Mammary epithelial cell (primary cell): ENCODE measurements at regions of chr20 and their contacts with region 1.

Region 1: GRCh38 chr20:3820048-3820900 is at the start of gene AP5S1:
- DNase-seq: peak; percentile 94
- H3K4me3 ChIP-seq: peak within 1 kb of the TSS; percentile 77 to 94 (median 82)
- H3K27ac ChIP-seq: peak within 1 kb of the TSS; percentile 87
- H3K4me1 ChIP-seq: peaks cover 17% of the 10 kb centered on the region
- H3K27me3 ChIP-seq: no peaks in the 10 kb centered on the region
- CTCF ChIP-seq: peak; percentile 67 to 95
- total RNA-seq, gene AP5S1: 14.9 to 15.5 TPM

Region 2: GRCh38 chr20:3753098-3753980 is 66.9 kb before region 1 on chr20:
- CTCF ChIA-PET with region 1: no interaction called
- dilution Hi-C with region 1: loop called (anchors 10 kb)
- in situ Hi-C with region 1: no loop called
- intact Hi-C with region 1: loop called (anchors 1 kb)
- DNase-seq: peak; percentile 41
- H3K4me3 ChIP-seq: no peak overlapping the region
- H3K27ac ChIP-seq: no peak overlapping the region
- H3K4me1 ChIP-seq: peaks cover 19% of the 10 kb centered on the region
- H3K27me3 ChIP-seq: no peaks in the 10 kb centered on the region
- CTCF ChIP-seq: peak; percentile 71 to 80

Region 3: GRCh38 chr20:3781153-3781910 is 38.9 kb before region 1 on chr20 and contains the start of gene SPEF1:
- CTCF ChIA-PET with region 1: interaction called, 6 read pairs
- dilution Hi-C with region 1: loop called (anchors 5 kb)
- in situ Hi-C with region 1: no loop called
- intact Hi-C with region 1: no loop called
- DNase-seq: peak; percentile 88
- H3K4me3 ChIP-seq: peak within 1 kb of the TSS; percentile 2 to 55 (median 51)
- H3K27ac ChIP-seq: peak within 1 kb of the TSS; percentile 11
- H3K4me1 ChIP-seq: peaks cover 44% of the 10 kb centered on the region
- H3K27me3 ChIP-seq: no peaks in the 10 kb centered on the region
- CTCF ChIP-seq: peak; percentile 7 to 56
- total RNA-seq, gene SPEF1: 0.17 to 0.26 TPM

Region 4: GRCh38 chr20:3786665-3787323 is 33.5 kb before region 1 on chr20 and contains the start of gene CENPB:
- CTCF ChIA-PET with region 1: interaction called, 16 read pairs
- dilution Hi-C with region 1: loop called (anchors 5 kb)
- in situ Hi-C with region 1: no loop called
- intact Hi-C with region 1: loop called (anchors 1 kb)
- DNase-seq: peak; percentile 81
- H3K4me3 ChIP-seq: peak within 1 kb of the TSS; percentile 61 to 80 (median 79)
- H3K27ac ChIP-seq: peak within 1 kb of the TSS; percentile 2
- H3K4me1 ChIP-seq: peaks cover 30% of the 10 kb centered on the region
- H3K27me3 ChIP-seq: no peaks in the 10 kb centered on the region
- CTCF ChIP-seq: peak; percentile 60 to 64
- total RNA-seq, gene CENPB: 56.8 to 72.2 TPM

Region 5: DNA sequence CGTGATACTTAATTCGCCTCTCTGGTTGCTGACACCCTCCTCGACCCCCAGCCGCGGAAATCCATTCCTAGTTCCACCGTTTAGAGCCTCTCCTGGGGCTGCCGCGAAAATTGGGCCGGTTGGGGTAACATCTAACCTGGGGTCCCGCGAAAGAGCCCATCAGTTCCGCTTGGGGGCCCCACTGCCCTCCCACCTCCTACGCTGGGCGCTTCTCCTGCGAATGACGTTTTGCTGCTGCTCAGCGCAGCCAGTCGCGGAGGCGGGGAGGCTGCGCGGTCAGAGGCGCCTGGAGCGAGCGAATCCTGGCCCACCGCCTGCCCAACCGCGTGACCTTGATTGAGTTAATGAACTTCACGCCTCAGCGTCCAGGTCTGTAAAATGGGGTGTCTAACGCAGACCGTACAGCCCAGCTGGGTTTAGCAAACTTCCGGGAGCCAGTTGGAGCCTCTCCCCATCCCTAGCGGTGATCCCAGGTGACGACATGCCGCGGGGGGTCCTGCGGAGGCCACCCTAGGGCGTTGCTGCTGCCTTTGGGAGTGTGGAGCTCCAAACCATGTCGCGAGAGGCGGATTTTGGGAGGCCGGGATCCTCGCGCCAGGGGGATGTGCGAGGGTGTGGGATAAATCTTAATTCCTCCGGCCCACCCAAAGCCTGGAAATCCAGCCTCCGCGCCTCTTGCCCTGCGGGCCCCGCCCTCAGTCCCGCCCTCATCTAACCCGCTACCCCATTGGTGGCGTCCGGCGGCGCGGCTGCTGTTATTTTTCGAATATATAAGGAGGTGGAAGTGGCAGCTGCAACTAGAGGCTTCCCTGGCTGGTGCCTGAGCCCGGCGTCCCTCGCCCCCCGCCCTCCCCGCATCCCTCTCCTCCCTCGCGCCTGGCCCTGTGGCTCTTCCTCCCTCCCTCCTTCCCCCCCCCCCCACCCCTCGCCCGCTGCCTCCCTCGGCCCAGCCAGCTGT is 24.5 kb before region 1 on chr20 and contains the start of gene CDC25B:
- CTCF ChIA-PET with region 1: no interaction called
- dilution Hi-C with region 1: no loop called
- in situ Hi-C with region 1: no loop called
- intact Hi-C with region 1: loop called (anchors 1 kb)
- DNase-seq: peak; percentile 89
- H3K4me3 ChIP-seq: peak within 1 kb of the TSS; percentile 74 to 89 (median 77)
- H3K27ac ChIP-seq: peak within 1 kb of the TSS; percentile 81
- H3K4me1 ChIP-seq: peaks cover 23% of the 10 kb centered on the region
- H3K27me3 ChIP-seq: no peaks in the 10 kb centered on the region
- CTCF ChIP-seq: peak; percentile 32 to 45
- total RNA-seq, gene CDC25B: 5.5 to 55.5 TPM

Region 6: GRCh38 chr20:3846740-3847428 is 26.6 kb after region 1 on chr20 and contains the start of gene MAVS:
- CTCF ChIA-PET with region 1: no interaction called
- dilution Hi-C with region 1: no loop called
- in situ Hi-C with region 1: no loop called
- intact Hi-C with region 1: loop called (anchors 1 kb)
- DNase-seq: peak; percentile 73
- H3K4me3 ChIP-seq: peak within 1 kb of the TSS; percentile 89 to 92 (median 90)
- H3K27ac ChIP-seq: peak within 1 kb of the TSS; percentile 56
- H3K4me1 ChIP-seq: peaks cover 10% of the 10 kb centered on the region
- H3K27me3 ChIP-seq: no peaks in the 10 kb centered on the region
- CTCF ChIP-seq: peak in 1 of 2 donors; percentile 3
- total RNA-seq, gene MAVS: 27.7 to 37.9 TPM

Region 7: GRCh38 chr20:3854462-3854871 is 34.2 kb after region 1 on chr20:
- CTCF ChIA-PET with region 1: no interaction called
- dilution Hi-C with region 1: no loop called
- in situ Hi-C with region 1: no loop called
- intact Hi-C with region 1: loop called (anchors 1 kb)
- DNase-seq: no peak
- H3K4me3 ChIP-seq: no peak overlapping the region
- H3K27ac ChIP-seq: no peak overlapping the region
- H3K4me1 ChIP-seq: no peaks in the 10 kb centered on the region
- H3K27me3 ChIP-seq: no peaks in the 10 kb centered on the region
- CTCF ChIP-seq: no peak

Region 8: DNA sequence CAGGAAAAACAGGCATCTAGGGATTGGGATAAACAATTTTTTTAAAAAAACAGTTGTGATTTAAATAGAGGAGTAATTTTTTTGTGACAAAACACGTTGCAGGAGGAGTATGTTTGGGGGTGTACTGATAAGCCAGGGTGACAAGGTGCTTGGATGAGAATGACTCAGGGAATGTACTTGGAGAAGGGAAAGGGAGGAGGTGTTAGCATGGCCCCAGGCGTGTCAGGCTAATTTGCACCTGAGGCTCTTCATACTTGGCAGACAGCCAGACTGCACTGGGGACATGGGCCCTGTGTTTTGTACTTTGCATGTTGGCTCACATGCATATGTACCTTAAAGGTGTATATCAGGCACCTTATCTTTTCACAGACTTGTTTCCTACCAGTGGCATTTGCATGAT is 91.7 kb after region 1 on chr20:
- CTCF ChIA-PET with region 1: no interaction called
- dilution Hi-C with region 1: no loop called
- in situ Hi-C with region 1: no loop called
- intact Hi-C with region 1: no loop called
- DNase-seq: no peak
- H3K4me3 ChIP-seq: no peak overlapping the region
- H3K27ac ChIP-seq: no peak overlapping the region
- H3K4me1 ChIP-seq: peaks cover 6% of the 10 kb centered on the region
- H3K27me3 ChIP-seq: no peaks in the 10 kb centered on the region
- CTCF ChIP-seq: no peak